ENCODE measurements at regions of chr10 and their contacts with region 1.

Region 1: GRCh38 chr10:110553905-110554304 is 13.6 kb upstream of the SMC3 start:
- DNase-seq: no peak

Region 2: DNA sequence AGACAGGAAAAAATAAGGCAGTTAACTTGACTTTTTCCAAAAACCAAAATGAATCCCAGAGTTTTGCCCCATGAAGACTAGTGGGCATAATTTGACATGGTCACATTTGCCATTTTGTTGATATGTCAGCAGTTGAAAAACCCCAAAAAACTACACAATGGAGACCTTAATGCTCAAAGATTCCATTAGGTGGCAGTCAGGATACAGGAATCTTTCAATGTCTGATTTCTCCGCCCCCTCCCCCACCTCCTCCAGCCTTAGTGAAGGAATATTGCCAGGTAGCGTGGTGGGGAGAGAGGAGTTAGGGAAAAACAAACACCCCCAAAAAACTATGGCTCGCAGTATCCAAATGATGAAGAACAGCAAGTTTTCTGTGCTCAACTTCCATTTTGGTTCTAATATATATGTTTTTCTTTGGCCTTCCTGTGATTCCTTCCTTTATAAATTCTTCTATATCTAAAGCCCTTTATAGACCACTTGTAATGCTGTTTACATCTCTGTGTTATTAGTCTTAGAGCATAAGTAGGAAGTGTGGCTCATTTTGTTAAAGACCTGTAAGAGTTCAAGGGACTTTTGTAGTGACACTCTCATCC is 242.5 kb before region 1 on chr10:
- intact Hi-C with region 1: loop called (anchors 5 kb)
- DNase-seq: peak in 31 of 42 donors; percentile 18 to 75 (median 37)

Region 3: GRCh38 chr10:110525349-110526260 is 28.3 kb before region 1 on chr10:
- intact Hi-C with region 1: no loop called
- DNase-seq: peak in 1 of 42 donors; percentile 22

Measured in head of caudate nucleus (tissue), 42 donors.